HepG2 (cell line): ENCODE measurements at regions of chr2 and their contacts with region 1.

Region 1: GRCh38 chr2:24871852-24872323 is 48.1 kb downstream of the ADCY3 start:
- DNase-seq: no peak
- ATAC-seq: peak; percentile 53
- H3K4me3 ChIP-seq: peak overlapping the region in 1 of 3 experiments; percentile 19; a peak in 1 of 6 replicates
- H3K27ac ChIP-seq: no peak overlapping the region
- H3K4me1 ChIP-seq: peaks cover 11% of the 10 kb centered on the region
- H3K27me3 ChIP-seq: peaks cover 0 to 24% of the 10 kb centered on the region in 2 experiments; a peak in 1 of 5 replicates
- CTCF ChIP-seq: no peak
- EP300 ChIP-seq: no peak
- POLR2A ChIP-seq: no peak
- RAD21 ChIP-seq: no peak

Region 2: DNA sequence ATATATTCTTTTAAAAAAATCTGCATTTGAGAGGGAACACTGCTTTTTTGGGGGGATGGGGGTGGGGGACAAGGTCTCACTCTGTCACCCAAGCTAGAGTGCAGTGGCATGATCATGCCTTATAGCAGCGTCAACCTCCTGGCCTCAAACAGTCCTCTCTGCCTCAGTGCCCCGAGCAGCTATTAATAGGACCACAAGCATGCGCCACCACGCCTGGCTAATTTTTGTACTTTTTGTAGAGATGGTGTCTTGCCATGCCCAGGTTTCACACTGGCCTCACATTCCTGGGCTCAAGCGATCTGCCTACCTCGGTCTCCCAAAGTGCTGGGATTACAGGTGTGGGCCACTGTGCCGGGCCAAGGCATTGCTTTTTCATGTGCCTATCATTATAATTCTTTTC is 1099.2 kb before region 1 on chr2:
- CTCF ChIA-PET with region 1: no interaction called
- POLR2A ChIA-PET with region 1: no interaction called
- in situ Hi-C with region 1: no loop called
- intact Hi-C with region 1: loop called (anchors 5 kb)
- DNase-seq: no peak
- ATAC-seq: no peak
- H3K4me3 ChIP-seq: no peak overlapping the region
- H3K27ac ChIP-seq: no peak overlapping the region
- H3K4me1 ChIP-seq: no peaks in the 10 kb centered on the region
- H3K27me3 ChIP-seq: no peaks in the 10 kb centered on the region
- CTCF ChIP-seq: no peak
- EP300 ChIP-seq: no peak
- POLR2A ChIP-seq: no peak
- RAD21 ChIP-seq: no peak

Region 3: DNA sequence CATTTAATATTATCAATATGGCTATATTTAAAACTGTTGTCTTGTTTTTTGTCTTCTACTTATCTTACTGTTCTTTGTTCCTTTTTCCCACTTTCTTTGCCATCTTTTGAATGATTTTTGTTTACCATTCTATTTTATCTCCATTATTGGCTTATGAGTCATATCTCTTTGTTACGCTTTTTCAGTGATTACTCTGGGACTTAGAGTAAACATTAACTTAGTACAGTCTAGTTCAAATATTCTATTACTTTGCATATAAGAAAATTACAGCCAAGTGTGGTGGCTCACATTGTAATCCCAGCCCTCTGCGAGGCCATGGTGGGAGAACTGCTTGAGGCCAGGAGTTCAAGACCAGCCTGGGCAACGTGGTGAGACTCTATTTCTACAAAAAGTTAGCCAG is 22.0 kb after region 1 on chr2:
- CTCF ChIA-PET with region 1: no interaction called
- POLR2A ChIA-PET with region 1: no interaction called
- in situ Hi-C with region 1: no loop called
- intact Hi-C with region 1: loop called (anchors 2 kb)
- DNase-seq: no peak
- ATAC-seq: no peak
- H3K4me3 ChIP-seq: no peak overlapping the region
- H3K27ac ChIP-seq: no peak overlapping the region
- H3K4me1 ChIP-seq: peaks cover 6% of the 10 kb centered on the region; the same call in 1 of the 2 replicates
- H3K27me3 ChIP-seq: peaks cover 1 to 26% of the 10 kb centered on the region in 2 experiments; a peak in 2 of 5 replicates
- CTCF ChIP-seq: no peak
- EP300 ChIP-seq: no peak
- POLR2A ChIP-seq: no peak
- RAD21 ChIP-seq: no peak